Mammary epithelial cell (primary cell): ENCODE measurements at regions of chr9 and their contacts with region 1.

Region 1: GRCh38 chr9:3732077-3733038 is 206.6 kb upstream of the RFX3 start:
- DNase-seq: peak; percentile 72
- H3K4me3 ChIP-seq: no peak overlapping the region
- H3K27ac ChIP-seq: no peak overlapping the region
- H3K4me1 ChIP-seq: no peaks in the 10 kb centered on the region
- H3K27me3 ChIP-seq: no peaks in the 10 kb centered on the region
- CTCF ChIP-seq: peak; percentile 77 to 84

Region 2: GRCh38 chr9:3467593-3468219 is 264.7 kb before region 1 on chr9:
- CTCF ChIA-PET with region 1: no interaction called
- dilution Hi-C with region 1: no loop called
- in situ Hi-C with region 1: loop called in 1 of 2 experiments (anchors 25 kb)
- intact Hi-C with region 1: loop called (anchors 1 kb)
- DNase-seq: peak; percentile 58
- H3K4me3 ChIP-seq: no peak overlapping the region
- H3K27ac ChIP-seq: no peak overlapping the region
- H3K4me1 ChIP-seq: no peaks in the 10 kb centered on the region
- H3K27me3 ChIP-seq: no peaks in the 10 kb centered on the region
- CTCF ChIP-seq: peak; percentile 100

Region 3: GRCh38 chr9:3880851-3881250 is 148.5 kb after region 1 on chr9:
- CTCF ChIA-PET with region 1: no interaction called
- dilution Hi-C with region 1: no loop called
- in situ Hi-C with region 1: no loop called
- intact Hi-C with region 1: loop called (anchors 10 kb)
- DNase-seq: peak; percentile 92
- H3K4me3 ChIP-seq: no peak overlapping the region
- H3K27ac ChIP-seq: peak overlapping the region; percentile 43
- H3K4me1 ChIP-seq: peaks cover 24% of the 10 kb centered on the region
- H3K27me3 ChIP-seq: no peaks in the 10 kb centered on the region
- CTCF ChIP-seq: no peak

Region 4: GRCh38 chr9:4077499-4078102 is 345.2 kb after region 1 on chr9:
- CTCF ChIA-PET with region 1: interaction called, 4 read pairs
- dilution Hi-C with region 1: no loop called
- in situ Hi-C with region 1: loop called in 1 of 2 experiments (anchors 10 kb)
- intact Hi-C with region 1: loop called (anchors 1 kb)
- DNase-seq: peak; percentile 59
- H3K4me3 ChIP-seq: no peak overlapping the region
- H3K27ac ChIP-seq: no peak overlapping the region
- H3K4me1 ChIP-seq: no peaks in the 10 kb centered on the region
- H3K27me3 ChIP-seq: no peaks in the 10 kb centered on the region
- CTCF ChIP-seq: peak; percentile 92 to 93

Region 5: DNA sequence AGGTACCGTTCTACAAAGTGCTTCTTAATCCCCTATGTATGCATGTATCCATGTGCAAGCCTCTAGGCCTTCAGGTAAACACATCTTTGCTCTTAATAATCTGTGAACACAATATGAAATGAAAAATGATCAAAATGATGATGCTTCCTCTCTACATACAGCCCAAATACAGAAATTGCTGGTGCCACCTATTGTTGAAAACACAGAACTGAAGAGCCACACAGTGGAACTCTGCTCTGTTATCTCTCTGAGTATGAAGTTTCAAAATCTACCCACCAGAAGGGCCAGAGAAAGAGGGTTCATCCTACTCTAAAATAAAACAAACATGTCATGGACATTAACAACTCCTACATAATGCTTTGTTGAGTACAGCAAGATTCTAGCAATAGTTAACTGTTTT is 496.2 kb after region 1 on chr9:
- CTCF ChIA-PET with region 1: no interaction called
- dilution Hi-C with region 1: no loop called
- in situ Hi-C with region 1: loop called (anchors 25 kb)
- intact Hi-C with region 1: loop called (anchors 1 kb)
- DNase-seq: peak; percentile 20
- H3K4me3 ChIP-seq: no peak overlapping the region
- H3K27ac ChIP-seq: no peak overlapping the region
- H3K4me1 ChIP-seq: peaks cover 16% of the 10 kb centered on the region
- H3K27me3 ChIP-seq: no peaks in the 10 kb centered on the region
- CTCF ChIP-seq: peak; percentile 53 to 67

Region 6: DNA sequence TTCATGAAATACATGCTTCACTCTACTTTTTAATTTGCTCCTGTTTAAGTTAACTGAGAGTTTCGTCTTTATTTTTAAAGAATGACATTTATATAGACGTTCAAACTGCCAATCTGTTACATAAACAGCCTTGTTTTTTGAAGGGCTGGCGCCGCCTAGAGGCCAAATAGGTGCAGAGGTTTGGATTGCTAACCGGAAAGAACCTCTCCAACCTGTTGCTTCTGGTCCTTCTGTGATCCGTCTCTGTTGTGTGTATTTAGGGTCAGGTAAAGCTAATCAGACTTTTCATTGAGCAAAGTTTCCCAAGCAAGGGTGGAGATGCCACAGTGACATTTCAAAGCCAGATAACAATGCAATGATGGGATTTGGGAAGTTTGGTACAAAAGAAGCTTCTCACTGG is 607.0 kb after region 1 on chr9:
- CTCF ChIA-PET with region 1: interaction called, 3 read pairs
- dilution Hi-C with region 1: no loop called
- in situ Hi-C with region 1: no loop called
- intact Hi-C with region 1: loop called (anchors 1 kb)
- DNase-seq: peak; percentile 80
- H3K4me3 ChIP-seq: no peak overlapping the region
- H3K27ac ChIP-seq: no peak overlapping the region
- H3K4me1 ChIP-seq: peaks cover 7% of the 10 kb centered on the region
- H3K27me3 ChIP-seq: no peaks in the 10 kb centered on the region
- CTCF ChIP-seq: peak; percentile 96 to 99

Region 7: GRCh38 chr9:4375424-4376200 is 643.3 kb after region 1 on chr9:
- CTCF ChIA-PET with region 1: no interaction called
- dilution Hi-C with region 1: no loop called
- in situ Hi-C with region 1: no loop called
- intact Hi-C with region 1: loop called (anchors 2 kb)
- DNase-seq: peak; percentile 56
- H3K4me3 ChIP-seq: no peak overlapping the region
- H3K27ac ChIP-seq: no peak overlapping the region
- H3K4me1 ChIP-seq: peaks cover 6% of the 10 kb centered on the region
- H3K27me3 ChIP-seq: no peaks in the 10 kb centered on the region
- CTCF ChIP-seq: peak; percentile 60